Naive thymus-derived CD4-positive, alpha-beta T cell (primary cell): ENCODE measurements at regions of chr5 and their contacts with region 1.

Region 1: GRCh38 chr5:181191529-181192394 is 13.2 kb downstream of the TRIM7 start:
- DNase-seq: peak; percentile 91 to 99 (median 97)
- ATAC-seq: peak; percentile 81
- H3K4me3 ChIP-seq: peak overlapping the region; percentile 99
- H3K4me3 Mint-ChIP-seq: peak overlapping the region; percentile 94 to 99 (median 97)
- H3K27ac ChIP-seq: peak overlapping the region; percentile 86
- H3K27ac Mint-ChIP-seq: peak overlapping the region; percentile 95 to 100 (median 99)
- H3K4me1 ChIP-seq: peaks cover 0 to 5% of the 10 kb centered on the region in 2 donors
- H3K4me1 Mint-ChIP-seq: peaks cover 16 to 47% (median 26%) of the 10 kb centered on the region in 7 donors
- H3K27me3 ChIP-seq: no peaks in the 10 kb centered on the region
- H3K27me3 Mint-ChIP-seq: peaks cover 0 to 24% (median 0%) of the 10 kb centered on the region in 5 donors

Region 2: GRCh38 chr5:180802325-180803180 is 389.2 kb before region 1 on chr5 and contains the start of gene MGAT1:
- CTCF ChIA-PET with region 1: no interaction called
- POLR2A ChIA-PET with region 1: interaction called, 4 read pairs
- intact Hi-C with region 1: loop called in 1 of 2 experiments (anchors 2 kb)
- DNase-seq: peak; percentile 47 to 91 (median 59)
- ATAC-seq: peak; percentile 80
- H3K4me3 ChIP-seq: peak within 1 kb of the TSS; percentile 77
- H3K4me3 Mint-ChIP-seq: peak within 1 kb of the TSS; percentile 89 to 99 (median 96)
- H3K27ac ChIP-seq: peak within 1 kb of the TSS; percentile 96
- H3K27ac Mint-ChIP-seq: peak within 1 kb of the TSS; percentile 91 to 100 (median 98)
- H3K4me1 ChIP-seq: peaks cover 75 to 84% of the 10 kb centered on the region in 2 donors
- H3K4me1 Mint-ChIP-seq: peaks cover 76 to 83% (median 79%) of the 10 kb centered on the region in 7 donors
- H3K27me3 ChIP-seq: no peaks in the 10 kb centered on the region
- H3K27me3 Mint-ChIP-seq: no peaks in the 10 kb centered on the region
- total RNA-seq, gene MGAT1: 101 to 206 (median 196) TPM

Region 3: DNA sequence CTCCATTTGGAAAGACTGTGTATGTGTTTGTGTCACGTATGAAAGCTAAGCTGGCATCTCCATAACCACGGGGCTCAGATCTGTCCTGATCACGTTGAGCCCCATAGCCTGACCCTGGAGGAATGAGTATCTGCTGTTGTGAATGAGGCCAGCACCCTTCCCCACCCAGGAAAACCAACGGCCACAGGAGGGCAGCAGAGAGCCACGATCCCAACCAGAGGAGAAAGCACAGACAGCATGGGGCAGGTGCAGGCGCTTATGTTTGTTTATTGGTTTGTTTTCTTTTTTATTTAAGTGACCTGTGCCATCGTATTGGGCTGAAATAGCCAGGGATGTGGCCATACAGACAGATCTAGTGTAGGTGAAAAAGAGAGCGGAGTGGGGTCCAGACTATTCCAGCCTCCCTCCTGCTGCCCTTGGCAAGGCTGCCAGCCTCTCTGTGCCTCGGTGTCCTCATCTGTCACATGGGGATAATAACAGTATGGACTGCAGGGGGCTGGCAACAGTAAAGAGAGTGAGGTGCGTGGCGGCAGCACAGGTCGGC is 32.4 kb before region 1 on chr5:
- CTCF ChIA-PET with region 1: interaction called, 3 read pairs
- POLR2A ChIA-PET with region 1: interaction called, 3 read pairs
- intact Hi-C with region 1: loop called in 1 of 2 experiments (anchors 2 kb)
- DNase-seq: peak; percentile 79 to 95 (median 87)
- ATAC-seq: peak; percentile 80
- H3K4me3 ChIP-seq: no peak overlapping the region
- H3K4me3 Mint-ChIP-seq: peak overlapping the region; percentile 57 to 83 (median 72)
- H3K27ac ChIP-seq: peak overlapping the region; percentile 89
- H3K27ac Mint-ChIP-seq: peak overlapping the region; percentile 73 to 97 (median 94)
- H3K4me1 ChIP-seq: peaks cover 15 to 19% of the 10 kb centered on the region in 2 donors
- H3K4me1 Mint-ChIP-seq: peaks cover 13 to 33% (median 27%) of the 10 kb centered on the region in 7 donors
- H3K27me3 ChIP-seq: no peaks in the 10 kb centered on the region
- H3K27me3 Mint-ChIP-seq: peaks cover 0 to 29% (median 17%) of the 10 kb centered on the region in 5 donors

Region 4: DNA sequence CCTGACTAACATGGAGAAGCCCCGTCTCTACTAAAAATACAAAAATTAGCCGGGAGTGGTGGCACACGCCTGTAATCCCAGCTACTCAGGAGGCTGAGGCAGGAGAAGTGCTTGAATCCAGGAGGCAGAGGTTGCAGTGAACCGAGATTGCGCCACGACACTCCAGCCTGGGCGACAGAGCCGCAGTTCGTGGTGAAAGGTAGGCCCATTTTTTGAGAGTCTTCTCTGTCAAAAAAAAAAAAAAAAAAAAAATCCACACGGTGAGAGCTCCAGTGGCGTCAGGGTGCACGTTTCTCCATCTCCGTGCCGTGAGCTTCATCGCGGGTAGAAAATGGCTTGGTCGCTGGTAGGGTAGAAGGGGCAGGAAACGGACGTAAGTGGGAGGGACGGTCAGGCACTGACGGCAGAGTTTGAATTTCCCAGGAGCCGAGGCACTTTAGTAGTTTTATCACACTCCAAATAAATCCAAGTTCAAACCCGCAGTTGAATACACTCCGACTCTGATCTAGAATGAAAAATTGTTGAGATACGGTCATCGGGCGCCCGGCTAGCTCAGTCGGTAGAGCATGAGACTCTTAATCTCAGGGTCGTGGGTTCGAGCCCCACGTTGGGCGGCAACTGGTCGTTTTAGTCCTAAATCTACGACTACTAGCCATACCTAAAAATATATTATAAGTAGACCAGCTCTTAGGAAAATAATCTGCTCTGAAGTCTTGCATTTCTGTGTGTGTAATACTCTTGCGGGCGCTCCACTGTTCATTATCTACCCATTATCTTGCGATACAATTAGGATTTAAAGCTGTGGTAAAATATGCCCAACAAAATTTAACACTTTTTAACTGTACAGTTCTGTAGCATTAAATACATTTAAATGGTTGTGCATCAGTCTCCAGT is 15.7 kb after region 1 on chr5:
- CTCF ChIA-PET with region 1: interaction called, 18 read pairs
- POLR2A ChIA-PET with region 1: interaction called, 259 read pairs
- intact Hi-C with region 1: loop called (anchors 1 kb)
- DNase-seq: peak; percentile 38 to 87 (median 78)
- ATAC-seq: peak; percentile 70
- H3K4me3 ChIP-seq: peak overlapping the region; percentile 67
- H3K4me3 Mint-ChIP-seq: peak overlapping the region; percentile 88 to 99 (median 94)
- H3K27ac ChIP-seq: peak overlapping the region; percentile 73
- H3K27ac Mint-ChIP-seq: peak overlapping the region; percentile 90 to 100 (median 98)
- H3K4me1 ChIP-seq: peaks cover 5 to 11% of the 10 kb centered on the region in 2 donors
- H3K4me1 Mint-ChIP-seq: peaks cover 21 to 45% (median 37%) of the 10 kb centered on the region in 7 donors
- H3K27me3 ChIP-seq: peaks cover 0 to 4% of the 10 kb centered on the region in 2 donors
- H3K27me3 Mint-ChIP-seq: peaks cover 0 to 36% (median 11%) of the 10 kb centered on the region in 5 donors

Region 5: DNA sequence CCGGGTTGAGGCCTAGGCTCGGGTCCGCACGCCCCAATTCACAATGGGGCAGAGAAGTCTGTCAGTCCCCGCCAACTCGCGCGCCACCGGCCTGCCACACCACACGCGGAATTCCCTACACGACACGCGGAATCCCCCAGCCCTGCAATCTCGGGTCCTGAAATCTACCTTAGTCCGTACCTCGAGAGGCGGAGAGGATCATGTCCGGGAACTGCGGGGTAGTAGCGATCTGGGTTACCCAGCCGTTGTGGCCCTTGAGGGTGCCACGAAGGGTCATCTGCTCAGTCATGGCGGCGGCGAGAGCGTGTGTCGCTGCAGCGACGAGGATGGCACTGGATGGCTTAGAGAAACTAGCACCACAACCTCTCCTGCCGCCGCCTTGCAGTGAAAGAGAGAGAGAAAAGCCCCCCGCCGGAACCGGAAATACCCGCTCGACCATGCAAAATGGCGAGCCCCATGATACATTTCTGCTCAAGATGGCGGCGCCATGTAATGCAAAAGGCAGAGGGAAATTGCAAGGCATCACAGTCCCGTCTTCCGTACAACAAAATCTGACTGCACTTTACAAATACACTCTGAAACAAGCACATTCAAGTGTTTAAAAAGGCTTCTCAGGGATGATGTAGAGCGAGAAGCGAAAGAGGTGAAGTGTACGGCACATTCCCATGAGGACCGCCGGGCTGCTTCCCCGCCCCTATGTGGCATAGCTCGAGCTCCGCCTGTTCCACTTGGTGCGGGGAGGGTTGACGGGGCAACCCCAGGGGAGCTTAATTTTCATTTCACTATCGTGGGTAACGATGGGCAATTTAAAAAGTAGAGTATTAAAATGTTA is 52.0 kb after region 1 on chr5 and contains the start of gene RACK1:
- CTCF ChIA-PET with region 1: interaction called, 5 read pairs
- POLR2A ChIA-PET with region 1: interaction called, 25 read pairs
- intact Hi-C with region 1: loop called (anchors 1 kb)
- DNase-seq: peak; percentile 77 to 93 (median 91)
- ATAC-seq: peak; percentile 83
- H3K4me3 ChIP-seq: peak within 1 kb of the TSS; percentile 99
- H3K4me3 Mint-ChIP-seq: peak within 1 kb of the TSS; percentile 91 to 99 (median 98)
- H3K27ac ChIP-seq: peak within 1 kb of the TSS; percentile 91
- H3K27ac Mint-ChIP-seq: peak within 1 kb of the TSS; percentile 93 to 100 (median 97)
- H3K4me1 ChIP-seq: peaks cover 39 to 46% of the 10 kb centered on the region in 2 donors
- H3K4me1 Mint-ChIP-seq: peaks cover 45 to 78% (median 66%) of the 10 kb centered on the region in 7 donors
- H3K27me3 ChIP-seq: no peaks in the 10 kb centered on the region
- H3K27me3 Mint-ChIP-seq: no peaks in the 10 kb centered on the region
- total RNA-seq, gene RACK1: 1,703 to 2,739 (median 2,322) TPM